Activated CD4-positive, alpha-beta memory T cell treated with anti-CD3 and anti-CD28 coated beads, Interleukin-2, amount 10 ng/mL, durations not matched to agents 7 days and 5 days (primary cell): ENCODE measurements at regions of chr15 and their contacts with region 1.

Region 1: GRCh38 chr15:90387537-90388461 is at the start of gene IQGAP1:
- DNase-seq: peak; percentile 97
- H3K4me3 Mint-ChIP-seq: peak within 1 kb of the TSS; percentile 92
- H3K27ac Mint-ChIP-seq: peak within 1 kb of the TSS; percentile 92
- H3K4me1 Mint-ChIP-seq: peaks cover 48% of the 10 kb centered on the region
- H3K27me3 Mint-ChIP-seq: no peaks in the 10 kb centered on the region
- total RNA-seq, gene IQGAP1: 229 to 240 TPM

Region 2: GRCh38 chr15:90101969-90102890 is 285.6 kb before region 1 on chr15 and contains the start of gene IDH2:
- CTCF ChIA-PET with region 1: no interaction called
- POLR2A ChIA-PET with region 1: interaction called, 11 read pairs
- DNase-seq: peak; percentile 79
- H3K4me3 Mint-ChIP-seq: peak within 1 kb of the TSS; percentile 75
- H3K27ac Mint-ChIP-seq: peak within 1 kb of the TSS; percentile 93
- H3K4me1 Mint-ChIP-seq: peaks cover 53% of the 10 kb centered on the region
- H3K27me3 Mint-ChIP-seq: peaks cover 11% of the 10 kb centered on the region
- total RNA-seq, gene IDH2: 218 to 224 TPM

Region 3: DNA sequence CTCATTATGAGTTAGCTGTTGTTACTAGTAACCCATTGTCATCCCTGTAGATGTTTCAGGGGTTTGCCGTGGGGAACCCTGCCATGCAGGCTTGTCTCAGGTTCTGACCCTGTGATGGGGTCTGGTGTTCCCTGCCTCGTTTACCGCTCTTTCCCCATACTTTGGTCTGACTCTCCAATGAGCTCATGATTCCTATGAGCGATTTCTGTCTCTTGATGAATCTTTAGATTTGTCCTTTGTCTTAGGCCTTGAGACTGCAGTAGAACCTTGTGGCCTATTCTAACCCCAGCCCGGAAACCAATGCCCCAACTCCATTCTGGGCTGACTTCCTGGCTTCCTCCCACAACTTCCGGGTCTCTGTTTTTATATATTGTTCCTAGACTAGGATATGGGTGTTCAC is 11.0 kb before region 1 on chr15:
- CTCF ChIA-PET with region 1: interaction called, 16 read pairs
- POLR2A ChIA-PET with region 1: interaction called, 94 read pairs
- DNase-seq: peak; percentile 85
- H3K4me3 Mint-ChIP-seq: peak overlapping the region; percentile 23
- H3K27ac Mint-ChIP-seq: peak overlapping the region; percentile 86
- H3K4me1 Mint-ChIP-seq: peaks cover 46% of the 10 kb centered on the region
- H3K27me3 Mint-ChIP-seq: no peaks in the 10 kb centered on the region

Region 4: GRCh38 chr15:90412356-90413194 is 24.8 kb after region 1 on chr15:
- CTCF ChIA-PET with region 1: interaction called, 7 read pairs
- POLR2A ChIA-PET with region 1: interaction called, 40 read pairs
- DNase-seq: no peak
- H3K4me3 Mint-ChIP-seq: no peak overlapping the region
- H3K27ac Mint-ChIP-seq: peak overlapping the region; percentile 34
- H3K4me1 Mint-ChIP-seq: peaks cover 73% of the 10 kb centered on the region
- H3K27me3 Mint-ChIP-seq: no peaks in the 10 kb centered on the region

Region 5: DNA sequence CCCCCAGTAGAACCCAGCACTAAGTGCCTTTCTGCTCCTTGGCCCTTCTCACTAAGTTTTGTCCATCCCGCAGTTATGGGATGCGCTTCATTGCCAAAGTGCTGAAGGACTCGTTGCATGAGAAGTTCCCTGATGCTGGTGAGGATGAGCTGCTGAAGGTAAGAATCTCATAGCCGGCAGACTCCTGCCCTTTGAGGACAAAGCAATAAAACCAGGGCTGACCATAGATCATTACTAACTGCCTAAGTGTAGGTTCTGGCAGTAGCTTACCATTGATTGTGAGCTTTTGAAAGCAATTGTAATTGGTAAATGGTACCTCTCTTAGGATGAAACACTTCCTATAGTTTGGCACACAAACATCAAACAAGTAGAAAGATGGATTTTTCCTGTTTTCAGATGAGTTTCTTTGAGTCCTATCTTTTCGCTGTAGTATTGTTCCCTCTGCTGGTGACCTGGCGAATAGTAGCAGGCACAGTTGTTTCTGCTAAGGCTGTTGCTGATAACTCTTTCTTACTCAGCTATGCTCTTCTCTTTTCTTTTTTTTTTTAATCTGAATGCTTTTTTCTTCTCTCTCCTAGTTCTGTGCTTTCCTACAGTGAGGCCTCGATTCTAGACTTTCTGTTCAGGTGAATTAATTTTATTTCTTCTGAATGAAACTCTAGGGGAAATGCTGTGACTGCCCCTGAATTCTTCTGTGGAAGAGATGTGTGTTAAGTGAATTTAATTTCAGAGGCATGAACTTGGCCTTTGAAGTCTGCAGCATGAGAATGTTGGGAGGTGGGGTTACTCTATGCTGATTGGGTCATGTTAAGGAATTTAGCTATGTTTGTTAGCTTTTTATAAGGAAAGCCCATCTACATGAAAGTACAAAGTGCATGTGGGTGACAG is 94.6 kb after region 1 on chr15:
- CTCF ChIA-PET with region 1: interaction called, 10 read pairs
- POLR2A ChIA-PET with region 1: interaction called, 7 read pairs
- DNase-seq: peak; percentile 53
- H3K4me3 Mint-ChIP-seq: no peak overlapping the region
- H3K27ac Mint-ChIP-seq: peak overlapping the region; percentile 23
- H3K4me1 Mint-ChIP-seq: peaks cover 49% of the 10 kb centered on the region
- H3K27me3 Mint-ChIP-seq: no peaks in the 10 kb centered on the region